ENCODE measurements at regions of chr13 and their contacts with region 1.

Region 1: GRCh38 chr13:40666045-40666904 is at the start of gene FOXO1:
- DNase-seq: peak; percentile 83 to 95 (median 91)
- ATAC-seq: peak; percentile 77
- H3K4me3 ChIP-seq: peak within 1 kb of the TSS; percentile 88 to 96
- H3K4me3 Mint-ChIP-seq: peak within 1 kb of the TSS; percentile 93
- H3K27ac ChIP-seq: peak within 1 kb of the TSS; percentile 75 to 83
- H3K27ac Mint-ChIP-seq: peak within 1 kb of the TSS; percentile 96
- H3K4me1 ChIP-seq: peaks cover 28% of the 10 kb centered on the region
- H3K4me1 Mint-ChIP-seq: peaks cover 40% of the 10 kb centered on the region
- H3K27me3 ChIP-seq: no peaks in the 10 kb centered on the region
- H3K27me3 Mint-ChIP-seq: no peaks in the 10 kb centered on the region
- CTCF ChIP-seq: no peak
- total RNA-seq, gene FOXO1: 97.2 to 97.3 TPM

Region 2: GRCh38 chr13:39037880-39038568 is 1628.3 kb before region 1 on chr13 and contains the starts of genes NHLRC3 and PROSER1:
- CTCF ChIA-PET with region 1: no interaction called
- POLR2A ChIA-PET with region 1: no interaction called
- intact Hi-C with region 1: loop called in 1 of 2 experiments (anchors 10 kb)
- DNase-seq: peak; percentile 76 to 95 (median 88)
- ATAC-seq: peak; percentile 89
- H3K4me3 ChIP-seq: peak within 1 kb of the TSS; percentile 66 to 93
- H3K4me3 Mint-ChIP-seq: peak within 1 kb of the TSS; percentile 94
- H3K27ac ChIP-seq: peak within 1 kb of the TSS; percentile 79 to 81
- H3K27ac Mint-ChIP-seq: peak within 1 kb of the TSS; percentile 99
- H3K4me1 ChIP-seq: peaks cover 30% of the 10 kb centered on the region
- H3K4me1 Mint-ChIP-seq: peaks cover 63% of the 10 kb centered on the region
- H3K27me3 ChIP-seq: no peaks in the 10 kb centered on the region
- H3K27me3 Mint-ChIP-seq: no peaks in the 10 kb centered on the region
- CTCF ChIP-seq: no peak
- total RNA-seq, gene NHLRC3: 8.2 to 9.3 TPM
- total RNA-seq, gene PROSER1: 51.8 to 52.4 TPM

Region 3: GRCh38 chr13:39159393-39159792 is 1506.9 kb before region 1 on chr13:
- CTCF ChIA-PET with region 1: no interaction called
- POLR2A ChIA-PET with region 1: no interaction called
- intact Hi-C with region 1: no loop called
- DNase-seq: no peak
- ATAC-seq: no peak
- H3K4me3 ChIP-seq: no peak overlapping the region
- H3K4me3 Mint-ChIP-seq: no peak overlapping the region
- H3K27ac ChIP-seq: no peak overlapping the region
- H3K27ac Mint-ChIP-seq: no peak overlapping the region
- H3K4me1 ChIP-seq: no peaks in the 10 kb centered on the region
- H3K4me1 Mint-ChIP-seq: no peaks in the 10 kb centered on the region
- H3K27me3 ChIP-seq: no peaks in the 10 kb centered on the region
- H3K27me3 Mint-ChIP-seq: peaks cover 23% of the 10 kb centered on the region
- CTCF ChIP-seq: no peak

Region 4: GRCh38 chr13:40190641-40191100 is 475.6 kb before region 1 on chr13:
- CTCF ChIA-PET with region 1: interaction called, 5 read pairs
- POLR2A ChIA-PET with region 1: interaction called, 41 read pairs
- intact Hi-C with region 1: loop called (anchors 1 to 2 kb)
- DNase-seq: peak; percentile 36 to 85 (median 75)
- ATAC-seq: peak; percentile 36
- H3K4me3 ChIP-seq: no peak overlapping the region
- H3K4me3 Mint-ChIP-seq: peak overlapping the region; percentile 66
- H3K27ac ChIP-seq: peak overlapping the region; percentile 50 to 58
- H3K27ac Mint-ChIP-seq: peak overlapping the region; percentile 90
- H3K4me1 ChIP-seq: peaks cover 65% of the 10 kb centered on the region
- H3K4me1 Mint-ChIP-seq: peaks cover 83% of the 10 kb centered on the region
- H3K27me3 ChIP-seq: no peaks in the 10 kb centered on the region
- H3K27me3 Mint-ChIP-seq: no peaks in the 10 kb centered on the region
- CTCF ChIP-seq: no peak

Region 5: GRCh38 chr13:40388617-40389016 is 277.7 kb before region 1 on chr13:
- CTCF ChIA-PET with region 1: interaction called, 3 read pairs
- POLR2A ChIA-PET with region 1: interaction called, 22 read pairs
- intact Hi-C with region 1: loop called (anchors 1 to 5 kb)
- DNase-seq: peak; percentile 65 to 95 (median 85)
- ATAC-seq: peak; percentile 90
- H3K4me3 ChIP-seq: peak overlapping the region; percentile 48 to 53
- H3K4me3 Mint-ChIP-seq: peak overlapping the region; percentile 88
- H3K27ac ChIP-seq: peak overlapping the region; percentile 91 to 99
- H3K27ac Mint-ChIP-seq: peak overlapping the region; percentile 98
- H3K4me1 ChIP-seq: peaks cover 29% of the 10 kb centered on the region
- H3K4me1 Mint-ChIP-seq: peaks cover 73% of the 10 kb centered on the region
- H3K27me3 ChIP-seq: no peaks in the 10 kb centered on the region
- H3K27me3 Mint-ChIP-seq: no peaks in the 10 kb centered on the region
- CTCF ChIP-seq: no peak

Region 6: GRCh38 chr13:40558656-40559055 is 107.6 kb before region 1 on chr13:
- CTCF ChIA-PET with region 1: interaction called, 5 read pairs
- POLR2A ChIA-PET with region 1: no interaction called
- intact Hi-C with region 1: loop called (anchors 5 to 10 kb)
- DNase-seq: no peak
- ATAC-seq: no peak
- H3K4me3 ChIP-seq: no peak overlapping the region
- H3K4me3 Mint-ChIP-seq: peak overlapping the region; percentile 59
- H3K27ac ChIP-seq: no peak overlapping the region
- H3K27ac Mint-ChIP-seq: peak overlapping the region; percentile 75
- H3K4me1 ChIP-seq: peaks cover 57% of the 10 kb centered on the region
- H3K4me1 Mint-ChIP-seq: peaks cover 88% of the 10 kb centered on the region
- H3K27me3 ChIP-seq: no peaks in the 10 kb centered on the region
- H3K27me3 Mint-ChIP-seq: no peaks in the 10 kb centered on the region
- CTCF ChIP-seq: no peak

Region 7: GRCh38 chr13:40629678-40630384 is 36.4 kb before region 1 on chr13:
- CTCF ChIA-PET with region 1: no interaction called
- POLR2A ChIA-PET with region 1: interaction called, 3 read pairs
- intact Hi-C with region 1: loop called in 1 of 2 experiments (anchors 5 kb)
- DNase-seq: no peak
- ATAC-seq: no peak
- H3K4me3 ChIP-seq: no peak overlapping the region
- H3K4me3 Mint-ChIP-seq: peak overlapping the region; percentile 35
- H3K27ac ChIP-seq: no peak overlapping the region
- H3K27ac Mint-ChIP-seq: peak overlapping the region; percentile 80
- H3K4me1 ChIP-seq: peaks cover 81% of the 10 kb centered on the region
- H3K4me1 Mint-ChIP-seq: peaks cover 87% of the 10 kb centered on the region
- H3K27me3 ChIP-seq: no peaks in the 10 kb centered on the region
- H3K27me3 Mint-ChIP-seq: no peaks in the 10 kb centered on the region
- CTCF ChIP-seq: no peak

Region 8: DNA sequence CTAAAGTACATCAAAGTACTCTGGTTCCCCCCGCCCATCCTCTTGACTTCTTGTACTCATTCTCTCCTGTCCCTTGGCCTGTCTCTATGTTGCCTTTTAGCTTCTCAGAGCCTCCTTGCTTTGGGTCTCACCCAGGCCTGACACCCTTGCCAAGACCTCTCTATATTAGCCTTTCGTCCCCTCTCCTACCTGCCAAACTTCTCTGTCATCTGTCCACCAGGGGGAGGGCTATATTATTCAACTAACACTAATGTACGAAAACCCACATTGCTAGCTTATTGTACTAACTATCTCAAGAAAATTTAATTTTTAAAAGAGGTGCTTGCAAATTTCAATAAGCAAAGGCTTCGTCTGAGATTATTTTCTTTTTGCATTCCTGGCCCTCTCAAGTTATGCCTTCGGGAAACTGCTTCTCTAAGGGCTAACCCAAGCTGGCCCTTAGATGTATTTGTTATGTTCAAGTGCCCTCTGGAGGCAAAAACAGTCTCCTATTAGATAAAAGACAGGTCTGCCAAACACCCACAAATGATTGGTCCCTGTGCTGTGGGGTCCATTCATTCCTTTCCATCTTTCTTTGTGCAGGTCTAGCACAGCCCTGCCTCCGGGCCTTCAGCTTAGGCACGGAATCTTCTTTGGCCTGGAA is 111.0 kb after region 1 on chr13:
- CTCF ChIA-PET with region 1: interaction called, 6 read pairs
- POLR2A ChIA-PET with region 1: interaction called, 3 read pairs
- intact Hi-C with region 1: loop called in 1 of 2 experiments (anchors 5 kb)
- DNase-seq: peak in 8 of 9 experiments; percentile 18 to 77 (median 36)
- ATAC-seq: no peak
- H3K4me3 ChIP-seq: peak overlapping the region in 1 of 2 experiments; percentile 17
- H3K4me3 Mint-ChIP-seq: peak overlapping the region; percentile 76
- H3K27ac ChIP-seq: peak overlapping the region; percentile 25 to 84
- H3K27ac Mint-ChIP-seq: peak overlapping the region; percentile 97
- H3K4me1 ChIP-seq: peaks cover 24% of the 10 kb centered on the region
- H3K4me1 Mint-ChIP-seq: peaks cover 30% of the 10 kb centered on the region
- H3K27me3 ChIP-seq: no peaks in the 10 kb centered on the region
- H3K27me3 Mint-ChIP-seq: no peaks in the 10 kb centered on the region
- CTCF ChIP-seq: peak; percentile 59

Region 9: GRCh38 chr13:41639955-41640780 is 973.9 kb after region 1 on chr13:
- CTCF ChIA-PET with region 1: no interaction called
- POLR2A ChIA-PET with region 1: no interaction called
- intact Hi-C with region 1: no loop called
- DNase-seq: no peak
- ATAC-seq: no peak
- H3K4me3 ChIP-seq: no peak overlapping the region
- H3K4me3 Mint-ChIP-seq: no peak overlapping the region
- H3K27ac ChIP-seq: no peak overlapping the region
- H3K27ac Mint-ChIP-seq: no peak overlapping the region
- H3K4me1 ChIP-seq: no peaks in the 10 kb centered on the region
- H3K4me1 Mint-ChIP-seq: peaks cover 2% of the 10 kb centered on the region
- H3K27me3 ChIP-seq: no peaks in the 10 kb centered on the region
- H3K27me3 Mint-ChIP-seq: no peaks in the 10 kb centered on the region
- CTCF ChIP-seq: no peak